ENCODE measurements at regions of chr12 and their contacts with region 1.

Region 1: GRCh38 chr12:2853626-2854025 is 3.2 kb downstream of the TEX52 start:
- DNase-seq: peak; percentile 69 to 92 (median 86)
- ATAC-seq: peak; percentile 72 to 91 (median 86)
- H3K4me3 ChIP-seq: no peak overlapping the region
- H3K27ac ChIP-seq: no peak overlapping the region
- H3K4me1 ChIP-seq: peaks cover 4 to 7% (median 5%) of the 10 kb centered on the region in 3 donors
- H3K27me3 ChIP-seq: no peaks in the 10 kb centered on the region
- CTCF ChIP-seq: peak; percentile 69 to 85 (median 82)

Region 2: GRCh38 chr12:2944401-2945047 is 90.9 kb after region 1 on chr12:
- intact Hi-C with region 1: loop called in 1 of 3 experiments (anchors 10 kb)
- DNase-seq: peak; percentile 73 to 88 (median 80)
- ATAC-seq: peak; percentile 92 to 98 (median 96)
- H3K4me3 ChIP-seq: peak overlapping the region in 1 of 4 donors; percentile 35
- H3K27ac ChIP-seq: peak overlapping the region in 3 of 4 donors; percentile 3 to 30 (median 18)
- H3K4me1 ChIP-seq: peaks cover 0 to 5% (median 0%) of the 10 kb centered on the region in 3 donors
- H3K27me3 ChIP-seq: no peaks in the 10 kb centered on the region
- CTCF ChIP-seq: peak; percentile 62 to 77 (median 63)

Measured in pancreas (tissue), 10 donors.